ENCODE measurements at regions of chr5 and their contacts with region 1.

Region 1: GRCh38 chr5:87412630-87413342 is at the start of gene CCNH:
- DNase-seq: peak; percentile 98
- ATAC-seq: peak; percentile 97 to 99 (median 98)
- H3K4me3 ChIP-seq: peak within 1 kb of the TSS; percentile 91
- H3K27ac ChIP-seq: peak within 1 kb of the TSS; percentile 98
- H3K4me1 ChIP-seq: peaks cover 20% of the 10 kb centered on the region
- H3K27me3 ChIP-seq: no peaks in the 10 kb centered on the region
- CTCF ChIP-seq: no peak
- total RNA-seq, gene CCNH: 19.9 to 41.9 (median 31.4) TPM

Region 2: DNA sequence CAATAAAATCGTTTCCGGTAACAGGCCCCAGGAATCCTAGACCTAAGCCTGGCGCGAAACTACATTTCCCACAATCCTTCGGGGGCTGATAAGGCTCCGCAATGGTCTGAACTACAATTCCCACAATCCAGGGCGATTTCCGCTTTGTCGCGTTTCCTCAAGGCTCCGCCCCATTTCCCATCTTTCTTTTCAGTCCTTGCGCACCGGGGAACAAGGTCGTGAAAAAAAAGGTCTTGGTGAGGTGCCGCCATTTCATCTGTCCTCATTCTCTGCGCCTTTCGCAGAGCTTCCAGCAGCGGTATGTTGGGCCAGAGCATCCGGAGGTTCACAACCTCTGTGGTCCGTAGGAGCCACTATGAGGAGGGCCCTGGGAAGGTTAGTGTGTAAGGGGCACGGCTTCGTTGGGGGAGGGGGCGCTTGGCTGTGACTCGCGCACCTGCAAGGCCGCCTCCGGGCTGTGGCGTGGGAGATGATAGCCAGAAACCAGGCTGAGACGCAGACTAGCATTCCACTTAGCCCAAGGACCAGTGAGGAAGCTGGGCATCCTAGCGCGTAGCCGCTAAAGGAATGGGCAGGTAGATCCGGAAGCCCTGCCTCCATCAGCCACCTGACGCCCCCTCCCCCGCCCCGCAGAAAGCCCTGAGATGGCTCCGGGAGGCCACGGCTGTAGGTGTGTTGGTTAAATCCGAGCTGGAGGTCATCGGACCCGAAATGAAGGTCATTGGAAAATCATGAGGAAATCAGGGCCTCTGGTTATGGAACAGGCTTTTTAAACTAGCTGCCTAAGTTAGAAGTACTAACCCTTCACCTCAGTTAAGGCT is 794.8 kb before region 1 on chr5 and contains the start of gene COX7C:
- intact Hi-C with region 1: loop called (anchors 10 kb)
- DNase-seq: peak; percentile 86 to 90
- ATAC-seq: peak; percentile 98 to 99 (median 99)
- H3K4me3 ChIP-seq: peak within 1 kb of the TSS; percentile 96
- H3K27ac ChIP-seq: peak within 1 kb of the TSS; percentile 90
- H3K4me1 ChIP-seq: peaks cover 7% of the 10 kb centered on the region
- H3K27me3 ChIP-seq: peaks cover 0 to 6% (median 3%) of the 10 kb centered on the region in 3 donors
- CTCF ChIP-seq: no peak
- total RNA-seq, gene COX7C: 865 to 1,220 (median 1,102) TPM

Measured in psoas muscle (tissue), 8 donors.